ENCODE measurements at regions of chr3 and their contacts with region 1.

Region 1: DNA sequence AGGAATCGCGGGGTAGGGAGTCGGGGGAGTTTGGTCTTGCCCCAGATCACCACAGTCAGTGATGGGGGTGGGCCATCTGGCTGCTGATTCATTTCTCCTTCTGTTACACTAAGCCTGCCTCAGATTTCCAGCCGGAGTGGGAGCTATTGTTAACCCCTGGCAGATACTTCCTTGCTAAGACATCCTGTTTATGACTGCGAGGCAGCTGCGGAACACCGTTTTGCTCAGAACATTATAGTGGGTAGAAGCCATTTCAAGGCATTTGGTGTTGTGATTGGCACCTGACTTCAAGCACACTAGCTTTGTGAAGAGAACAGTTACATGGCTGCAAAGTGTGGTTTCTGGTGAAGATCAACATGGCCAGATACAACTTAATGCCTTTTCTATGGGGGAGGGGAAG is 73.8 kb downstream of the FLNB start:
- DNase-seq: peak; percentile 50 to 92 (median 90)
- H3K4me3 ChIP-seq: peak overlapping the region in 4 of 7 experiments; percentile 32 to 42 (median 39)
- H3K27ac ChIP-seq: peak overlapping the region in 1 of 2 experiments; percentile 56
- H3K4me1 ChIP-seq: peaks cover 21 to 67% (median 45%) of the 10 kb centered on the region in 4 experiments
- H3K27me3 ChIP-seq: no peaks in the 10 kb centered on the region

Region 2: GRCh38 chr3:57992452-57993213 is 89.4 kb before region 1 on chr3:
- CTCF ChIA-PET with region 1: no interaction called
- POLR2A ChIA-PET with region 1: interaction called, 15 read pairs
- DNase-seq: no peak
- H3K4me3 ChIP-seq: no peak overlapping the region
- H3K27ac ChIP-seq: no peak overlapping the region
- H3K4me1 ChIP-seq: no peaks in the 10 kb centered on the region
- H3K27me3 ChIP-seq: no peaks in the 10 kb centered on the region